ENCODE measurements at regions of chr2 and their contacts with region 1.

Region 1: GRCh38 chr2:28392297-28393113 is at the start of gene FOSL2:
- DNase-seq: peak; percentile 98
- H3K4me3 ChIP-seq: peak within 1 kb of the TSS; percentile 88 to 96
- H3K27ac ChIP-seq: peak within 1 kb of the TSS; percentile 100
- H3K4me1 ChIP-seq: peaks cover under 1% of the 10 kb centered on the region
- H3K27me3 ChIP-seq: no peaks in the 10 kb centered on the region
- CTCF ChIP-seq: peak in 1 of 4 experiments; percentile 16
- POLR2A ChIP-seq: peak; percentile 99
- total RNA-seq, gene FOSL2: 57.4 to 94.2 TPM

Region 2: DNA sequence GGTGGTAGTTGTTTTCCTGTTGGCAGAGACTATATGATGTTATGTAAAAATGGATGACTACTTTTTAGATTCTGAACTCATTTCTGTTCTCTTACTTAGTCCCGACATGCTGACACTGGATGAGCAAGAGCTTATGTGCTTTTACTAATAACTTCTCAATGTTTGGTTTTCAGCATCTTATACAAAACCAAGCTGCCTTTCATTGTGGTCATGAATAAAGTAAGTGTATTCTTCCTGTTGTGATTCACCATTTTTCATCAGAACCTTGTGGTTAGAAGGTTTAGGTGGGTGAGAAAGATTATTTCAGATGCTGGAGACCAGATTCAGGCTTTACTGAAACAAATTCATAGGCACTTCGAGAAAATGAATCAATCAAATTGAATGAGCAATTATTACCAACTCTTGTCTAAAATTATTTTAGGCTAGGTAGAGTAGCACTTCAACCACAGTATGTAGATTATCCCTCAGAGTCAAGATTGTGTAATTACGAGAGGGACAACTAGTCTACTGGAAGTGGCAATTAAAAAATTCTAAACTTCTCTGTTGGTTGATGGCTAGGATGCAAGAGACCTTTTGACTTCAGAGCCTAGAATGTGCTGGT is 754.4 kb before region 1 on chr2:
- intact Hi-C with region 1: no loop called
- DNase-seq: no peak
- H3K4me3 ChIP-seq: no peak overlapping the region
- H3K27ac ChIP-seq: no peak overlapping the region
- H3K4me1 ChIP-seq: no peaks in the 10 kb centered on the region
- H3K27me3 ChIP-seq: no peaks in the 10 kb centered on the region
- CTCF ChIP-seq: no peak
- POLR2A ChIP-seq: no peak

Region 3: DNA sequence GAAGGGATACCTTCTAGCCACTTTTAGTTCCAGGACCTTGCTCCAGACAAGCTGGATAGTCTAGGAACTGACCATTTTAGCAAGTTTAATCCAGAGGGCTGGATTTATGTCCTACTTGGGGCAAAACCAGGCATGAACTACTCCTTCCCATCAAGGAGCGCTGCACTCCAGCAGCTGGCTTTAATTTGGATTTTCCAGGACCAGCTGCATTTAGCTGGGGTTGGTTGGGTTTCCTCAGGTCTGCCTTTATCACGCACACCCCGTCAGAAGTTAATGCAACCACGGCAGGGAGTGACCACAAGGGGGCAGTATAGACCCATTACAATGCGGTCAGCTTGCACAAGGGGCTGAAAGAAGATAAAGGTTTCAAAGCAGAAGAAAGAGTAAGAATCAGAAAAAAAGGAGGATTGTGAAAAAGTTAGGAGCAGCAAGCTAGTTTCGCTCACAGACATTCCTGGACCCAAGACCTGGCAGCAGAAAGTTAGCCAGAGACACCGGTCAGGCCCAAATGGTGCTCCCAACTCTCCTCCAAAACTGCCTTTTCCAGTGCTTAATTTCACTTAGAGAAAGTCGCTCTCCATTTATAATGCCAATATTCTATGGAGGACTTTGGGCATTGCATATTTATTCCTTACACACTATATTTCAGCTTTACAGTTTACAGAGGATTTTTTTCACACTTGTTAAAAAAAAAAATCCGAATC is 688.7 kb before region 1 on chr2:
- intact Hi-C with region 1: loop called (anchors 1 kb)
- DNase-seq: peak; percentile 88
- H3K4me3 ChIP-seq: no peak overlapping the region
- H3K27ac ChIP-seq: peak overlapping the region; percentile 85 to 89
- H3K4me1 ChIP-seq: peaks cover 14% of the 10 kb centered on the region
- H3K27me3 ChIP-seq: no peaks in the 10 kb centered on the region
- CTCF ChIP-seq: peak; percentile 88 to 97 (median 93)
- POLR2A ChIP-seq: no peak

Region 4: GRCh38 chr2:27771548-27772335 is 620.8 kb before region 1 on chr2 and contains the start of gene MRPL33:
- intact Hi-C with region 1: loop called (anchors 5 kb)
- DNase-seq: peak; percentile 92
- H3K4me3 ChIP-seq: peak within 1 kb of the TSS; percentile 62 to 79
- H3K27ac ChIP-seq: peak within 1 kb of the TSS; percentile 79 to 90
- H3K4me1 ChIP-seq: peaks cover 9% of the 10 kb centered on the region
- H3K27me3 ChIP-seq: no peaks in the 10 kb centered on the region
- CTCF ChIP-seq: peak in 1 of 4 experiments; percentile 2
- POLR2A ChIP-seq: peak; percentile 57
- total RNA-seq, gene MRPL33: 140 to 186 TPM

Region 5: DNA sequence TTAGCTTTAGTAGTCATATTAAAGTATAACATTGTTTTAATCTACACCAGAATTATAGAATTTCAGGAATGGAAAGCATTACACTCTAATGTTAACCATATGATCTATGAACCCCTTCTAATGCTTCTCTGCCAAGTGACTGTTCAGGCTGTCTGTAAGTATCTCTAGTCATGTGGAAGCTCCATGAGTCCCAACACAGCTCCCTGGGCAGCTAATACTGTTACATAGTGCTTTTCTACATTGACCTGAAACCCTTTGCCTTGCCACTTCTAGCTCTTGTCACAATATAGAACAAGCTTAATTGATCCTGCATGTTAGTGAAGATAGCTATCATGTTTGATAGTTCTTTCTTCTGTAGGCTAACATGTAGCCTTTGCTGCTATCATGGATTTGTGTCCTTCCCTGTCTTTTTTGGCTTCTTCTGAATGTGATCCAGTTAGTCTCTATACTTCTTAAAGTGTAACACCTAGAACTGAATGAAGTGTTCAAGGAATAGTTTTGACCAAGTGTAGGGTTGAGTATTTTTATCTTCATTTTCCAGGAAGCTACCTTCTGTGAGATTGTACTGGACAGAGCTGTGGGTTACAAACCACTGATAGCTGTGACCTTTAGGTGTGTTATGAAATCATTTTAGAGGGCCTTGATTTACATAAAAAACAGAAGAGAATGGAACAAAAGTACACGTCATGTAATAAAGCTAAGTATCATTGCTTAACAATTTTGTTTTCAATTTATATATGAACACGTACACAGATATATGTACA is 478.3 kb before region 1 on chr2:
- intact Hi-C with region 1: loop called (anchors 10 kb)
- DNase-seq: no peak
- H3K4me3 ChIP-seq: no peak overlapping the region
- H3K27ac ChIP-seq: peak overlapping the region; percentile 67 to 70
- H3K4me1 ChIP-seq: peaks cover 7% of the 10 kb centered on the region
- H3K27me3 ChIP-seq: no peaks in the 10 kb centered on the region
- CTCF ChIP-seq: no peak
- POLR2A ChIP-seq: no peak

Region 6: GRCh38 chr2:28080911-28081310 is 311.6 kb before region 1 on chr2:
- intact Hi-C with region 1: loop called (anchors 10 kb)
- DNase-seq: peak; percentile 57
- H3K4me3 ChIP-seq: no peak overlapping the region
- H3K27ac ChIP-seq: peak overlapping the region; percentile 31 to 56
- H3K4me1 ChIP-seq: peaks cover 7% of the 10 kb centered on the region
- H3K27me3 ChIP-seq: no peaks in the 10 kb centered on the region
- CTCF ChIP-seq: no peak
- POLR2A ChIP-seq: no peak

Region 7: DNA sequence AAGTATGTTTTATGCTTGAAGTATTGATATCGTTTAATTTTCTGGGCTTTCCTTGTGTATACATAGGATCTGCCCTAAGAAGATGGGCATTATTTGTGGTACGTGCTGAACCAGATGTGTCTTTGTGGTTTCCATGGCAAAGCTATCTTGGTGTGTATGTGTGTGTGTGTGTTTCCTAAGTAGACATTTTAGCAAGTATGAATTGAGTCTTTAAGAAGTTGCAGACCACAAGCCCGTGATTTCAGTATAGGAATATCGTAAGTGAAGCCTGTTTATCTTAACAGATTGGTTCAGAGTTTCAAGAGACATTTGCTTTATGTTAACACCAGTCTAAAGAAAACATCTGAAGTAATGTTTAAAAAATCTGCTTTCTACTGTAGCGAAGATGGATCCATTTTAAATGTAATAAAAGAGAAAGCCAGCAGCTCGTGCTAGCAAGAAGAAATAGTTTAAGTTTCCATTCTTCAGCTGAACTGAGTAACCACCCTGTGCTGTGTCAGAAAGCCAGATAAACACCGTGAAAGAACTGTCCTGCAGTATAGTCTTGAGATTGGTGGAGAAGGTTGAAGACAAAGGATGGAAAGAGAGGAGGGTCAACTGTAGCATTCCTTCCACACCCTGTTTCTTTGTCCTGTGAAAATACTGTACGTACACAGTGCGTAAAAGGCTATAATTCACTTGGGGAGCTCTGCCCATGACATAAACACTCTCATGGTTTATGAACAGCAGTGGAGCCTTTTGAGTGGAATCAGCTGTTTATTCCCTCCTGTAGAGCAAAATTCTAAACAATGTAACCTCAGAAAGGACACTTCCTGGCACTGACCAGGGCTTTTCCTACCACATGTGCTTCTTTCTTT is 91.8 kb before region 1 on chr2:
- intact Hi-C with region 1: loop called (anchors 5 kb)
- DNase-seq: no peak
- H3K4me3 ChIP-seq: no peak overlapping the region
- H3K27ac ChIP-seq: peak overlapping the region; percentile 6 to 38
- H3K4me1 ChIP-seq: no peaks in the 10 kb centered on the region
- H3K27me3 ChIP-seq: no peaks in the 10 kb centered on the region
- CTCF ChIP-seq: no peak
- POLR2A ChIP-seq: no peak